Activated CD4-positive, alpha-beta T cell treated with anti-CD3 and anti-CD28 coated beads for 36 hours (primary cell): ENCODE measurements at regions of chr3 and their contacts with region 1.

Region 1: GRCh38 chr3:30658328-30659052 is 52.1 kb downstream of the TGFBR2 start:
- DNase-seq: peak; percentile 74
- ATAC-seq: peak; percentile 64
- H3K4me3 Mint-ChIP-seq: peak overlapping the region; percentile 60
- H3K27ac Mint-ChIP-seq: peak overlapping the region; percentile 95
- H3K4me1 Mint-ChIP-seq: peaks cover 100% of the 10 kb centered on the region
- H3K27me3 Mint-ChIP-seq: no peaks in the 10 kb centered on the region

Region 2: DNA sequence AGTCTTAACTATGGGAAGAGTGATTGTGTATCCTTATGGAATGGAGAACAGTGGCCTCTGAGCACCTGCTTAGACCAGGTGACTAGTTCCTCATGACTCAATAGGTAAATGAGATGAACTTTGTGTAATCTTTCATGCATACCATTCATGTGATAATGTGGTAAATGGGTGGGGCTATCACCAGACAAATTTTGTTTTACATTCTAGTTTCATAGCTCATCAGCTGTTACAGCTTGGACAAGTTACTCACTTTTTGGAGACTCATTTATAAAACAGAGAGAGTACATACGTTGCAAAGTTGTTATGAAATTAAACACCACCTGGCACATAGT is 155.8 kb before region 1 on chr3:
- CTCF ChIA-PET with region 1: interaction called, 3 read pairs
- POLR2A ChIA-PET with region 1: interaction called, 4 read pairs
- intact Hi-C with region 1: loop called in 1 of 2 experiments (anchors 1 kb)
- DNase-seq: no peak
- ATAC-seq: peak; percentile 66
- H3K4me3 Mint-ChIP-seq: no peak overlapping the region
- H3K27ac Mint-ChIP-seq: peak overlapping the region; percentile 68
- H3K4me1 Mint-ChIP-seq: peaks cover 37% of the 10 kb centered on the region
- H3K27me3 Mint-ChIP-seq: no peaks in the 10 kb centered on the region

Region 3: DNA sequence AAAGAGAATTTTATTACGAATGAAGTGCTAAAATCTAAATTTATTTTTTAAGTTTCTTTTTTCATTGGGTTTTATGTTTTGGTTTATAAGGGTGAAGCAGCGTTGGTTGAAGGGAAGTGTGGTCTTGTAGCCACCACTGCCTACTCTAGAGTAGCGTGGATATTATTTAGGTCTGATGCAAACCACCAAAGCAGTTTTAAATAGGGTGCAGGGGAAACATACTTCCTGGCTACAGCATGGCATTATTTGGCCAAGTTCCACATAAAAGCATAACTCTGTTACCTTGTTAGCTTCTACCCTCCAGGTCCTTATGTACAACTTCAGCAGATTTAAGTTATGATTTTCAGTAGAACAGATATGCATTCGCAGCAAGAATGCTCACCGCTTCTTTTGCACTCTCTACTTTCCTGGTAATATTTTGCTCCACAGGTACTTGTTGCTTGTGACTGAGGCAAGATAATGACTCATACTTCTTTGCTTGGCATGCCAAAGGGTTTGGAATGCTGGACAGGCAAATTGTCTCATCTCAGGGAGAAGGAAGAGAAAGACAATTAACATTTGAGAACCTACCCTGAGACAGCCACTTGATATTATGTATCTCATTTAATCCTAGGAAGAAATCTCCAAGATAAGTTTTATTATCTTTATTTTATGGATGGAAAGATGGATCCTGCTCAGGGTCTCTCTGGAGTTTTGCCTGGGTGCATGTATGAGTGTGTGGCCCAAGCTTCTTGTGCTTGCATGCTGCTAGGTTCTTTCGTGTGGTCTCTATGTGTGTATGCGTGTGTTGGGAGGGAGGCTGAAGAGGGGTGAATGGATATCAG is 46.7 kb before region 1 on chr3:
- CTCF ChIA-PET with region 1: interaction called, 11 read pairs
- POLR2A ChIA-PET with region 1: interaction called, 21 read pairs
- intact Hi-C with region 1: loop called in 1 of 2 experiments (anchors 2 kb)
- DNase-seq: no peak
- ATAC-seq: no peak
- H3K4me3 Mint-ChIP-seq: peak overlapping the region; percentile 99
- H3K27ac Mint-ChIP-seq: peak overlapping the region; percentile 94
- H3K4me1 Mint-ChIP-seq: peaks cover 68% of the 10 kb centered on the region
- H3K27me3 Mint-ChIP-seq: no peaks in the 10 kb centered on the region

Region 4: GRCh38 chr3:30628901-30629590 is 29.4 kb before region 1 on chr3:
- CTCF ChIA-PET with region 1: interaction called, 15 read pairs
- POLR2A ChIA-PET with region 1: interaction called, 6 read pairs
- intact Hi-C with region 1: loop called (anchors 1 kb)
- DNase-seq: no peak
- ATAC-seq: no peak
- H3K4me3 Mint-ChIP-seq: peak overlapping the region; percentile 61
- H3K27ac Mint-ChIP-seq: peak overlapping the region; percentile 97
- H3K4me1 Mint-ChIP-seq: peaks cover 96% of the 10 kb centered on the region
- H3K27me3 Mint-ChIP-seq: no peaks in the 10 kb centered on the region

Region 5: GRCh38 chr3:30681643-30682211 is 23.2 kb after region 1 on chr3:
- CTCF ChIA-PET with region 1: interaction called, 11 read pairs
- POLR2A ChIA-PET with region 1: interaction called, 5 read pairs
- intact Hi-C with region 1: loop called in 1 of 2 experiments (anchors 1 kb)
- DNase-seq: peak; percentile 40
- ATAC-seq: peak; percentile 21
- H3K4me3 Mint-ChIP-seq: peak overlapping the region; percentile 6
- H3K27ac Mint-ChIP-seq: peak overlapping the region; percentile 83
- H3K4me1 Mint-ChIP-seq: peaks cover 95% of the 10 kb centered on the region
- H3K27me3 Mint-ChIP-seq: no peaks in the 10 kb centered on the region

Region 6: DNA sequence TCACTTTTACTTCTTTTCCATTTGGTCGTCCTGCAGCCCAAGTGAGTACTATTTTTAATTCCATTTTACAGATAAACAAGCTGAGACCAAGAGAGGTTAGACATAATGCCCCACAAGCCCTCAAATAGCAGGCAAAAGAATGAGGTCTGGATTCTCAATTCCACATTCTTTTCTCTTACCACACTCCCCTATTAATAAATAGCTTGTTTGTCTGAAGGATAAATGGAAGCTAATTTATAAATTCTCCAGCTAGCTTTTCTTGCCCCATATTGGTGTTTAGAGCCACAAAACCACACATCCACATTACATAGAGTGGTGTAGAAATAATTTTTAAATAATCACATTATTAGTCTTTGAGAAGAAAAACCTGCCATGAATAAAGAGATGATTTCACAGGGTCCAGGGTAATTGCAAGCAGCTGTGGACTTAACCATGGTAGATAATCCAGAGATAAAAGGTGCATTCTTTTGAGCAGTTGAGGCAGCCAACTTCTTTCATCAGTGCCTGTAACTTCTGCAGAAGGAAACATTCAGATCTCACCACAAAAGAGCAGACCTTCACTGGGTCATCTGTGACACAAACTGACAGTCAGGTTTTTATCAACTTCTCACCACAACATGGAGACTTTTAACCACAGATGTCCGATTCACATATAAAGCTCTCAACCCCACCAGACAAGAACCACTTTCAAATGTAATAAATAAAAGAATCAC is 560.8 kb after region 1 on chr3:
- CTCF ChIA-PET with region 1: no interaction called
- POLR2A ChIA-PET with region 1: no interaction called
- intact Hi-C with region 1: loop called in 1 of 2 experiments (anchors 10 kb)
- DNase-seq: no peak
- ATAC-seq: no peak
- H3K4me3 Mint-ChIP-seq: no peak overlapping the region
- H3K27ac Mint-ChIP-seq: no peak overlapping the region
- H3K4me1 Mint-ChIP-seq: peaks cover 86% of the 10 kb centered on the region
- H3K27me3 Mint-ChIP-seq: no peaks in the 10 kb centered on the region